Activated B cell treated with CpG ODN at 0.5 μM for 24 hours (primary cell): ENCODE measurements at regions of chr17 and their contacts with region 1.

Region 1: GRCh38 chr17:65154770-65155621 is 17.8 kb downstream of the RGS9 start:
- DNase-seq: peak; percentile 30
- ATAC-seq: peak; percentile 85
- H3K4me3 Mint-ChIP-seq: peak overlapping the region; percentile 64
- H3K27ac Mint-ChIP-seq: peak overlapping the region; percentile 82
- H3K4me1 Mint-ChIP-seq: peaks cover 23% of the 10 kb centered on the region
- H3K27me3 Mint-ChIP-seq: no peaks in the 10 kb centered on the region
- CTCF ChIP-seq: no peak

Region 2: DNA sequence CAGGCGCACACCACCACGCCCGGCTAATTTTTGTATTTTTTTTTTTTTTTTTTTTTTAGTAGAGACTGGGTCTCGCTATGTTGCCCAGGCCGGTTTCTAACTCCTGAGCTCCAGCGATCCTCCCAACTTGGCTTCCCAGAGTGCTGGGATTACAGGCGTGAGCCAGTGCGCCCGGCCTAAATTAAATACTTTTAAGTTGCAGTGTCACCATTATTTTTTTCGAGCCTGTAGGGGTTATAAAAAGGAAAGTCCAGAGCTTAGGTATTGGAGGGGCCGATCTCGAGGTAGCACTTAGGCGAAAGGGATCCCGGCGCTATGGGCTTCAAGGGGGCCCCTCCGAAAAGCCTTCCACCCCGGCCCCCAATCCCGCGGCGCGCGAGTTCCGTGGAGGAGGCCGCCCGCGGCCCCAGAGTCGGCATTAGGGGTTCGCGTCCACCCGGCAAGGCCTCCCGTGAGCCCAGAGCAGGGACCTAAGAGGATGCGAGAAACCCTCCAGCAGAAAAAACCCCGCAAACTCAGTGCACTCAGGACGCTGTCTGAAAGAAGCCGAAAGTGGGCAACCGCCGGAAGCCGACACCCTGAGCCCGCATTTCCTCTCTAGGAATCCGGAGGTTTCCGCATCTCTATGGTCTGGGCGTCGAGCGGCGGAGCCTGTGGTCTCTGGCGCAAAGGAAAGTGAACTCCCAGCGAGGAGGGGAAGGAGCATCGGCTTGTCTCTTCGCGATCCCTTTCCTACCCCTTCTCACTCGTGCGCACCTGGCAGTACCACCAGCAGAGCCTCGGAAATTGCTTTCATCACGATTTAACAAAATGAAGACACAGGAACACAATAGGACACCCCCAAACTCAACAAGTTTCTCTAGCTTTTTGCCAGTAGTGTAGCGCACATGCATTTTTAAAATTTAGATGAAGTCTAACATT is 31.9 kb before region 1 on chr17:
- CTCF ChIA-PET with region 1: no interaction called
- POLR2A ChIA-PET with region 1: interaction called, 16 read pairs
- intact Hi-C with region 1: loop called (anchors 1 kb)
- DNase-seq: peak; percentile 64
- ATAC-seq: peak; percentile 85
- H3K4me3 Mint-ChIP-seq: peak overlapping the region; percentile 87
- H3K27ac Mint-ChIP-seq: peak overlapping the region; percentile 96
- H3K4me1 Mint-ChIP-seq: peaks cover 18% of the 10 kb centered on the region
- H3K27me3 Mint-ChIP-seq: peaks cover 5% of the 10 kb centered on the region
- CTCF ChIP-seq: no peak

Region 3: GRCh38 chr17:65137021-65137991 is 17.7 kb before region 1 on chr17 and contains the start of gene RGS9:
- CTCF ChIA-PET with region 1: interaction called, 10 read pairs
- POLR2A ChIA-PET with region 1: interaction called, 3 read pairs
- intact Hi-C with region 1: loop called (anchors 1 kb)
- DNase-seq: peak; percentile 84
- ATAC-seq: peak; percentile 91
- H3K4me3 Mint-ChIP-seq: peak within 1 kb of the TSS; percentile 81
- H3K27ac Mint-ChIP-seq: peak within 1 kb of the TSS; percentile 65
- H3K4me1 Mint-ChIP-seq: peaks cover 20% of the 10 kb centered on the region
- H3K27me3 Mint-ChIP-seq: peaks cover 9% of the 10 kb centered on the region
- CTCF ChIP-seq: no peak
- total RNA-seq, gene RGS9: 3.2 TPM in 2 replicates

Region 4: GRCh38 chr17:65181237-65182061 is 26.5 kb after region 1 on chr17:
- CTCF ChIA-PET with region 1: interaction called, 4 read pairs
- POLR2A ChIA-PET with region 1: interaction called, 12 read pairs
- intact Hi-C with region 1: no loop called
- DNase-seq: no peak
- ATAC-seq: peak; percentile 62
- H3K4me3 Mint-ChIP-seq: no peak overlapping the region
- H3K27ac Mint-ChIP-seq: peak overlapping the region; percentile 66
- H3K4me1 Mint-ChIP-seq: peaks cover 45% of the 10 kb centered on the region
- H3K27me3 Mint-ChIP-seq: peaks cover 3% of the 10 kb centered on the region
- CTCF ChIP-seq: no peak

Region 5: DNA sequence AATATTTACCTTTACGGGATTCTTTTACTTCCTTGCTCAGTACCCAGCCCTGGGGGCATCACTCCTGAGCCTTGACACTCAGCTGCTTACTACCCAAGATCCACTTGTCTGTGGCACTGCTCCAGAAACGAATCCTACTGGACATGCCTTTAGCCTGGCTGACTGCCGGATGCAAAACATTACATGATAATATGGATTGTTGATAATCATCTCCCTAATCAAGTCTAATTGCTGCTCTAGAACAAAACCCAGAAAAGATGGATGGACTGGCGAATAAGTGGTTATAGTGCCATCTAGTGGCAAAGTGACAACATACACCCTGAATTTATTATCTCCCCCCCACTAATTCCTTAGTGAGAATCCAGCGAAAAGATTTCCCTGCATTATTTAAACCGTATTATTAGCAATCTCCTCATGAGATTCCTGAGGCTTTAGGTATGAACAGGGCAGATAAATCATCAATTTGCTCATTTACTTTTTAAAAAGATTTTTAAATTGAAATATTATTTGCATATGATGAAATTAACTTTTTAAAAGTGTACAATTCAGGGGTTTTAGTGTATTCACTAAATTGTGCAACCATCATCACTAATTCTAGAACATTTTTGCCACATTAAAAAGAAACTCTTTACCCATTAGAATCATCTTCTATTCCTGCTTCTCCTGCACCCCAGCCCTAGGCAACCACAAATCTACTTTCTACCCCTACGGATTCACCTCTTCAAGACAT is 43.8 kb after region 1 on chr17:
- CTCF ChIA-PET with region 1: interaction called, 3 read pairs
- POLR2A ChIA-PET with region 1: interaction called, 3 read pairs
- intact Hi-C with region 1: loop called (anchors 5 kb)
- DNase-seq: no peak
- ATAC-seq: peak; percentile 67
- H3K4me3 Mint-ChIP-seq: no peak overlapping the region
- H3K27ac Mint-ChIP-seq: peak overlapping the region; percentile 8
- H3K4me1 Mint-ChIP-seq: no peaks in the 10 kb centered on the region
- H3K27me3 Mint-ChIP-seq: peaks cover 2% of the 10 kb centered on the region
- CTCF ChIP-seq: peak; percentile 78

Region 6: DNA sequence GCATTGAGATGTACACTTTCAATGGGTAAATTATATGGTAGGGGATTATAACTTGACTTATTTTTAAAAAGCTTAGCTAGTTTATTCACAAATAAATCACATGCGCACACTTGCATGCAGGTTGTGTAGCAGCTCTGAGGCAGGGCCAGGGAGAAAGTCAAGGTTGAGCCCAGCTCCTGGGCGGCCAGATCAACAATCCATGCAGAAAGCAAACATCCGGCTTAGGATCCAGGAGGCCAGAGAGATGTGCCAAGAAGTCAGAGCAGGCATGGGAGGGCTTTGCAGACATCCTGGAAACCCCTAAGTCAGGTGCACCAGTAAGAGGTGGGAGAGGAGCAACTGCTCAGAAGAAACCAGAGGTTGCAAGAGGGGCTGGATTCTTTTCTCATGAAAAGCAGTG is 220.0 kb after region 1 on chr17:
- CTCF ChIA-PET with region 1: no interaction called
- POLR2A ChIA-PET with region 1: no interaction called
- intact Hi-C with region 1: no loop called
- DNase-seq: no peak
- ATAC-seq: no peak
- H3K4me3 Mint-ChIP-seq: no peak overlapping the region
- H3K27ac Mint-ChIP-seq: no peak overlapping the region
- H3K4me1 Mint-ChIP-seq: no peaks in the 10 kb centered on the region
- H3K27me3 Mint-ChIP-seq: peaks cover 24% of the 10 kb centered on the region
- CTCF ChIP-seq: no peak